ENCODE measurements at regions of chr19 and their contacts with region 1.

Region 1: GRCh38 chr19:5953680-5954213 is 24.2 kb downstream of the RANBP3 start:
- DNase-seq: peak; percentile 72
- ATAC-seq: peak; percentile 35
- H3K4me3 Mint-ChIP-seq: peak overlapping the region; percentile 53
- H3K27ac Mint-ChIP-seq: peak overlapping the region; percentile 98
- H3K4me1 Mint-ChIP-seq: peaks cover 93% of the 10 kb centered on the region
- H3K27me3 Mint-ChIP-seq: no peaks in the 10 kb centered on the region

Region 2: GRCh38 chr19:5880604-5881078 is 73.1 kb before region 1 on chr19:
- CTCF ChIA-PET with region 1: no interaction called
- POLR2A ChIA-PET with region 1: no interaction called
- intact Hi-C with region 1: no loop called
- DNase-seq: no peak
- ATAC-seq: no peak
- H3K4me3 Mint-ChIP-seq: no peak overlapping the region
- H3K27ac Mint-ChIP-seq: no peak overlapping the region
- H3K4me1 Mint-ChIP-seq: no peaks in the 10 kb centered on the region
- H3K27me3 Mint-ChIP-seq: peaks cover 10% of the 10 kb centered on the region

Region 3: GRCh38 chr19:5967994-5968430 is 14.3 kb after region 1 on chr19:
- CTCF ChIA-PET with region 1: interaction called, 54 read pairs
- POLR2A ChIA-PET with region 1: interaction called, 4 read pairs
- intact Hi-C with region 1: no loop called
- DNase-seq: peak; percentile 80
- ATAC-seq: peak; percentile 89
- H3K4me3 Mint-ChIP-seq: no peak overlapping the region
- H3K27ac Mint-ChIP-seq: peak overlapping the region; percentile 89
- H3K4me1 Mint-ChIP-seq: peaks cover 87% of the 10 kb centered on the region
- H3K27me3 Mint-ChIP-seq: no peaks in the 10 kb centered on the region

Region 4: GRCh38 chr19:6218491-6219162 is 264.9 kb after region 1 on chr19:
- CTCF ChIA-PET with region 1: no interaction called
- POLR2A ChIA-PET with region 1: no interaction called
- intact Hi-C with region 1: no loop called
- DNase-seq: peak; percentile 91
- ATAC-seq: peak; percentile 94
- H3K4me3 Mint-ChIP-seq: no peak overlapping the region
- H3K27ac Mint-ChIP-seq: no peak overlapping the region
- H3K4me1 Mint-ChIP-seq: no peaks in the 10 kb centered on the region
- H3K27me3 Mint-ChIP-seq: no peaks in the 10 kb centered on the region